T-cell (primary cell): ENCODE measurements at regions of chr2 and their contacts with region 1.

Region 1: GRCh38 chr2:158034199-158034866 is 67.3 kb upstream of the UPP2 start:
- DNase-seq: peak in 3 of 35 experiments; percentile 4 to 34 (median 14)
- ATAC-seq: peak in 1 of 4 experiments; percentile 27
- H3K4me3 ChIP-seq: no peak overlapping the region
- H3K4me3 Mint-ChIP-seq: no peak overlapping the region
- H3K27ac ChIP-seq: no peak overlapping the region
- H3K27ac Mint-ChIP-seq: no peak overlapping the region
- H3K4me1 ChIP-seq: no peaks in the 10 kb centered on the region
- H3K4me1 Mint-ChIP-seq: no peaks in the 10 kb centered on the region
- H3K27me3 ChIP-seq: no peaks in the 10 kb centered on the region
- H3K27me3 Mint-ChIP-seq: peaks cover 20% of the 10 kb centered on the region in 2 donors

Region 2: GRCh38 chr2:158745044-158745865 is 710.9 kb after region 1 on chr2:
- CTCF ChIA-PET with region 1: interaction called, 4 to 13 read pairs
- POLR2A ChIA-PET with region 1: no interaction called
- DNase-seq: peak in 27 of 35 experiments; percentile 7 to 53 (median 27)
- ATAC-seq: peak in 3 of 4 experiments; percentile 26 to 45 (median 43)
- H3K4me3 ChIP-seq: no peak overlapping the region
- H3K4me3 Mint-ChIP-seq: no peak overlapping the region
- H3K27ac ChIP-seq: no peak overlapping the region
- H3K27ac Mint-ChIP-seq: no peak overlapping the region
- H3K4me1 ChIP-seq: no peaks in the 10 kb centered on the region
- H3K4me1 Mint-ChIP-seq: no peaks in the 10 kb centered on the region
- H3K27me3 ChIP-seq: peaks cover 0 to 8% of the 10 kb centered on the region in 2 experiments
- H3K27me3 Mint-ChIP-seq: peaks cover 19 to 30% of the 10 kb centered on the region in 2 donors

Region 3: GRCh38 chr2:158879229-158879916 is 845.0 kb after region 1 on chr2:
- CTCF ChIA-PET with region 1: no interaction called
- POLR2A ChIA-PET with region 1: no interaction called
- DNase-seq: no peak
- ATAC-seq: no peak
- H3K4me3 ChIP-seq: no peak overlapping the region
- H3K4me3 Mint-ChIP-seq: no peak overlapping the region
- H3K27ac ChIP-seq: no peak overlapping the region
- H3K27ac Mint-ChIP-seq: no peak overlapping the region
- H3K4me1 ChIP-seq: no peaks in the 10 kb centered on the region
- H3K4me1 Mint-ChIP-seq: no peaks in the 10 kb centered on the region
- H3K27me3 ChIP-seq: peaks cover 0 to 2% of the 10 kb centered on the region in 2 experiments
- H3K27me3 Mint-ChIP-seq: no peaks in the 10 kb centered on the region